ENCODE measurements at regions of chr3 and their contacts with region 1.

Region 1: DNA sequence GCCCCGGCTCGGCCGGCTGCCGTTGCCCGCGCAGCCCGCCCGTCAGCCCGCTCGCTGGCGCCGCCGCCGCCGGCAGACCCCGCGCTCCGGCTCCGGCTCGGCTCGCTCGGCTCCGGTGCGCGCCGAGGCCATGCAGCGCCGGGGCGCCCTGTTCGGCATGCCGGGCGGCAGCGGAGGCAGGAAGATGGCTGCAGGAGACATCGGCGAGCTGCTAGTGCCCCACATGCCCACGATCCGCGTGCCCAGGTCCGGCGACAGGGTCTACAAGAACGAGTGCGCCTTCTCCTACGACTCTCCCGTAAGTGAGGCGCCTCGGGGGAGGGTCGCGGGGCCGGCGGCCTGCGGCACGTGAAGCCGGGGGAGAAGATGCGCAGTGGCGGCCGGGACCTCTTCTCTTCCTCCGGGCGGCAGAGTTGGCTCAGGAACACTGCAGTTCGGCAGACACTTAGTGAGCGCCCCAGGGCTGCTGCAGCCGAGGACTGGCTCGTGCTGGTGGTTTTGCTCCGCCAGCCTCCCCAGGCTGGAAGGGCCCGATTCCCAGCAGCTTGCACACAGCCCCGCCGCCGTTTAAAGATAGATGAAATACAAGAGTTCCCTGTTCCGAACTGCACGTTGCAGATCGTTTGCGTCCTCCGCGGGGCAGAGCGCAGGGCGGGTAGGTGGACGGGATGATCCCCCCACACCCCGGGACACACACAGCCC is 407 bp downstream of the USP13 start:
- DNase-seq: peak; percentile 64 to 72 (median 71)
- H3K4me3 ChIP-seq: peak overlapping the region; percentile 77 to 82
- H3K4me3 Mint-ChIP-seq: peak overlapping the region; percentile 87 to 97 (median 96)
- H3K27ac ChIP-seq: peak overlapping the region; percentile 61
- H3K27ac Mint-ChIP-seq: peak overlapping the region; percentile 87 to 96 (median 91)
- H3K4me1 ChIP-seq: peaks cover 21% of the 10 kb centered on the region
- H3K4me1 Mint-ChIP-seq: peaks cover 26 to 44% (median 34%) of the 10 kb centered on the region in 4 donors
- H3K27me3 ChIP-seq: no peaks in the 10 kb centered on the region
- H3K27me3 Mint-ChIP-seq: no peaks in the 10 kb centered on the region

Region 2: DNA sequence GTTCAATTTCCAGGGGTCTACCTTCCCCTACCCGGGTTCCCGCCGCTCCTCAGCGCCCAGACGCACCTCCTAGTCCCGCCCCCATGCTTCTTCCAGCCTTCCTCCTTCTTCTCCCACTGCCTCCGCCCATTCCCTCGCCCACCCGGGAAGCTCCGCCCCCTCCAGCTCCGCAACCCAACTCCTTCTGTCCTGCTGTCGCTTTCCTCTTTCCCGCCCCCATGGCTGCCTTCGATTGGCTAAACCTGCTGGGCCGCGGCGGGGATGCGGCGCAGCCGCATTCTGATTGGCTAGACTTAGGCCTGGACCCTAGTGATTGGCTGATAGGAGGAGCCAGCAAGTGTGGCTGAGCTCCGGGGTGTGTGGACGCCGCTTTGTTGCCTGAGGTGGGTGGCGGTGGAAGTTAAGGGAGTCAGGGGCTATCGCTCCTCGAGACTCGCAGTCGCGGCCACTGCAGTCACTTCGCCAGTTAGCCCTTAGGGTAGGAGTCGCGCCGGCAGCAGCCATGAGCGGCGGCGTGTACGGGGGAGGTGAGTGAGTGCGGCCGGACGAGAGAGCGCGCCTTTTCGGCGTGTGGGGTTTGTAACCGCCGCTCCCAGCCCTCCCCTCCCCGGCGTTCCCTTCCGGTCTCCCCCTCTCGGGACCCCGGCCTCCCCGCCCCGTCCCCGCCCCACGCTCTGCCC is 90.5 kb before region 1 on chr3 and contains the start of gene ACTL6A:
- CTCF ChIA-PET with region 1: interaction called, 5 read pairs
- POLR2A ChIA-PET with region 1: interaction called, 4 read pairs
- intact Hi-C with region 1: loop called (anchors 1 kb)
- DNase-seq: peak; percentile 96 to 98 (median 96)
- H3K4me3 ChIP-seq: peak within 1 kb of the TSS; percentile 67 to 76
- H3K4me3 Mint-ChIP-seq: peak within 1 kb of the TSS; percentile 96 to 100 (median 99)
- H3K27ac ChIP-seq: peak within 1 kb of the TSS; percentile 58
- H3K27ac Mint-ChIP-seq: peak within 1 kb of the TSS; percentile 81 to 98 (median 97)
- H3K4me1 ChIP-seq: peaks cover 29% of the 10 kb centered on the region
- H3K4me1 Mint-ChIP-seq: peaks cover 22 to 37% (median 28%) of the 10 kb centered on the region in 4 donors
- H3K27me3 ChIP-seq: no peaks in the 10 kb centered on the region
- H3K27me3 Mint-ChIP-seq: peaks cover 0 to 4% of the 10 kb centered on the region in 2 donors
- total RNA-seq, gene ACTL6A: 56.9 to 62.4 TPM

Region 3: DNA sequence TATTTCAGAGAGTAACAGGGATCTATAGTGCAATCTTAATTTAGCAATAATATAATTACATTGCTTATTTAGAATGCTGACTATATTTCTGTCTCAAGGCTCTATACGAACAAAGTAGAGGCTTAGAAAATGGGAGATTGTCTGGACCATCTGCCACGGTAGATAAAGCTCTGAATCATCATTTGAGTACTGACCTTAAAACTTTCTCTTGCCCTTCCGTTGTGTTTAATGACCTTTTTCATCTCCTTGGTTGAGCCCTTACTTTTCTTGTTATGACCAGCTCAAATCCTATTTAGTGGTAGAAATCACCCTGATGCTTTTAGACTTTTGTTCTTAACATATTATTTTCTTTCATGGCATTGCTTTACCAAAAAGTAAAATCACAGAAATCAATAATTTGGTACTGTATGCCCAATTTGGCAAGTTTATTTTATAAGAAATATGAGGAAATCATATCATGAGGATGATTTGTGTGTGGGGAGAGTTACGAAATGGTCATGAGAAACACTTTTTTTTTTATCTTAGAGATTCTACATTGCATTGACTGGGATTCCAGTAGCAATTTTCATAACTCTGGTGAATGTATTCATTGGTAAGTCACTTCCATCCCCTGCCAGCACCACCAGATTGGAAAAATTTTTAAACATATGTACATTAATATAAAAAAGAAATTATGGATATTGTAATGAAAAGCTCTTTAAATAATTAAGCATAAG is 37.6 kb before region 1 on chr3:
- CTCF ChIA-PET with region 1: interaction called, 10 read pairs
- POLR2A ChIA-PET with region 1: no interaction called
- intact Hi-C with region 1: no loop called
- DNase-seq: no peak
- H3K4me3 ChIP-seq: no peak overlapping the region
- H3K4me3 Mint-ChIP-seq: no peak overlapping the region
- H3K27ac ChIP-seq: no peak overlapping the region
- H3K27ac Mint-ChIP-seq: peak overlapping the region in 2 of 7 donors; percentile 7 to 11
- H3K4me1 ChIP-seq: no peaks in the 10 kb centered on the region
- H3K4me1 Mint-ChIP-seq: peaks cover 6 to 13% (median 9%) of the 10 kb centered on the region in 4 donors
- H3K27me3 ChIP-seq: no peaks in the 10 kb centered on the region
- H3K27me3 Mint-ChIP-seq: no peaks in the 10 kb centered on the region

Region 4: GRCh38 chr3:180601688-180602666 is 948.7 kb after region 1 on chr3 and contains the start of gene TTC14:
- CTCF ChIA-PET with region 1: no interaction called
- POLR2A ChIA-PET with region 1: interaction called, 7 read pairs
- intact Hi-C with region 1: loop called (anchors 5 kb)
- DNase-seq: peak; percentile 92 to 94 (median 93)
- H3K4me3 ChIP-seq: peak within 1 kb of the TSS; percentile 67 to 89
- H3K4me3 Mint-ChIP-seq: peak within 1 kb of the TSS; percentile 90 to 98 (median 96)
- H3K27ac ChIP-seq: peak within 1 kb of the TSS; percentile 89
- H3K27ac Mint-ChIP-seq: peak within 1 kb of the TSS; percentile 95 to 99 (median 97)
- H3K4me1 ChIP-seq: peaks cover 30% of the 10 kb centered on the region
- H3K4me1 Mint-ChIP-seq: peaks cover 19 to 42% (median 26%) of the 10 kb centered on the region in 4 donors
- H3K27me3 ChIP-seq: no peaks in the 10 kb centered on the region
- H3K27me3 Mint-ChIP-seq: peaks cover 5 to 6% of the 10 kb centered on the region in 2 donors
- total RNA-seq, gene TTC14: 168 to 177 TPM

Region 5: GRCh38 chr3:180989291-180990163 is 1336.3 kb after region 1 on chr3 and contains the start of gene DNAJC19:
- CTCF ChIA-PET with region 1: no interaction called
- POLR2A ChIA-PET with region 1: no interaction called
- intact Hi-C with region 1: loop called (anchors 5 kb)
- DNase-seq: peak; percentile 93 to 96 (median 94)
- H3K4me3 ChIP-seq: peak within 1 kb of the TSS; percentile 94 to 98
- H3K4me3 Mint-ChIP-seq: peak within 1 kb of the TSS; percentile 93 to 100 (median 98)
- H3K27ac ChIP-seq: peak within 1 kb of the TSS; percentile 70
- H3K27ac Mint-ChIP-seq: peak within 1 kb of the TSS; percentile 92 to 98 (median 97)
- H3K4me1 ChIP-seq: peaks cover 31% of the 10 kb centered on the region
- H3K4me1 Mint-ChIP-seq: peaks cover 12 to 47% (median 33%) of the 10 kb centered on the region in 4 donors
- H3K27me3 ChIP-seq: no peaks in the 10 kb centered on the region
- H3K27me3 Mint-ChIP-seq: peaks cover 0 to 6% of the 10 kb centered on the region in 2 donors
- total RNA-seq, gene DNAJC19: 59.7 to 60.1 TPM

Measured in CD4-positive, alpha-beta memory T cell (primary cell).